ENCODE measurements at regions of chr1 and their contacts with region 1.

Region 1: GRCh38 chr1:23098463-23099170 is 70.0 kb downstream of the LUZP1 start:
- DNase-seq: peak; percentile 57
- H3K4me3 ChIP-seq: no peak overlapping the region
- H3K27ac ChIP-seq: no peak overlapping the region
- H3K4me1 ChIP-seq: no peaks in the 10 kb centered on the region
- H3K27me3 ChIP-seq: no peaks in the 10 kb centered on the region
- CTCF ChIP-seq: peak; percentile 73 to 96 (median 90)
- POLR2A ChIP-seq: no peak

Region 2: DNA sequence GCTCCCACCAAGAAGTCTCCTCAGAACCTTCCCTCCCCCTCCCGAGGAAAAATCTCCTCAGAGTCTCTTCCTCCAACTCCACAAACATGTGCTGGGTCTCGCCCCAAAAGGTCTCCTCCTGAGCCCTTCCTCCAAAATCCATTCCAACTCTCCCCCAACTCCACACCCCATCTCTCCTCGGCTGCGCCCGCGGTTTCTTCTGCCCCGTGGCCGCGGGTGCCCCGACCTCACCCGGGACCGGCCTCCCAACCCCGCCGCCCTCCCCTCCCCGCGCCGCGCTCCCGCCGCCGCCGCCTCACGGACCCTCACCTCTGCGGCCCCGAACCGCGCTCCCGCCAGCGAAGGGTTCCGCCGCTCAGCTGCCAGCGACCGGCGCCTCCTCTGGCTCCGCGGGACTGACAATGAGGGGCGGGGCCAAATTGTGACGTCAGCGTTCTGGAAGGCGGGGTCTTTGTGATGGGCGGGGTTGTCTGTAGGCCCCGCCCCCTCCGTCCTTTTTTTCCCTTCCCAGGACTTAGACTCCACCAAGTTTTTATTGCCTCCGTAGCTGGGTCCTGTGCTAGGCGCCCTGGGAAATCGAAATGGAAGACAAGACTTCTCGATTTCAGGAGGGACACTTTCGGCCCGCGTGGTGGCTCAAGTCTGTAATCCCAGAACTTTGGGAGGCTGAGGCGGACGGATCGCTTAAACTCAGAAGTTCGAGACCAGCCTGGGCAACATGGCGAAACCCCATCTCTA is 70.0 kb after region 1 on chr1 and contains the start of gene LUZP1:
- intact Hi-C with region 1: loop called (anchors 5 kb)
- DNase-seq: peak; percentile 90
- H3K4me3 ChIP-seq: peak within 1 kb of the TSS; percentile 75 to 93
- H3K27ac ChIP-seq: peak within 1 kb of the TSS; percentile 89 to 90
- H3K4me1 ChIP-seq: peaks cover 4% of the 10 kb centered on the region
- H3K27me3 ChIP-seq: no peaks in the 10 kb centered on the region
- CTCF ChIP-seq: peak in 2 of 4 experiments; percentile 6 to 7
- POLR2A ChIP-seq: peak; percentile 99
- total RNA-seq, gene LUZP1: 16.9 to 17.5 TPM

Region 3: DNA sequence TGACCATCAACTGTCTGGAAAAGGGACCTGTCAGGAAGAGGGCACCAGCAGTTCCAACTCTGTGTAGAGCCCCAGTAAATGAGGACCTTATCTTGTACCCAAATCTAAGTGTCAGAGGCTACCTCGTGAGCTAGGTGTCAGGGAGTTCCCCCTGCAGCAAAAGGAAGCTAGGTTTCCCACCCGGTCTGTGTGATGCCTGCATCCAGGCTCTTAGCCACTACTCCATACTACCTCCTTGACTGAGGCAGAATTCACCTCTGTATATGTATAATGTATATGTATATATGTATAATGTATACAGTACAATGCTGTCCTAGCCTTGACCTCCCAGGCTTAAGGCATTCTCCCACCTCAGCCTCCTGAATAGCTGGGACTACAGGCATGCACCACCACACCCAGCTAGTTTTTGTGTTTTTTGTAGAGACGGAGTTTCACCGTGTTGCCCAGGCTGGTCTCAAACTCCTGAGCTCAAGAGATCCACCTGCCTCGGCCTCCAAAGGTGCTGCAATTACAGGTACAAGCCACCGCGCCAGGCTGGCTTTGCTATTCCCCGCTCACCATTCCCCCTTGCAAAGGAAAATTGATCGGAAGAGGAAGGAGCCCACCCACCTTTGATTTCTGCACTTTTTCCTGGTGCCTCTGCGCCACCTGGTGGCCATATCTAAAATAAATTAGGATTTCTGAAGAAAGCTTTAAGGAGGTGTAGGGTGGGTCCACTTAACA is 85.8 kb after region 1 on chr1:
- intact Hi-C with region 1: loop called (anchors 2 kb)
- DNase-seq: peak; percentile 37
- H3K4me3 ChIP-seq: peak overlapping the region in 1 of 2 donors; percentile 19
- H3K27ac ChIP-seq: no peak overlapping the region
- H3K4me1 ChIP-seq: no peaks in the 10 kb centered on the region
- H3K27me3 ChIP-seq: no peaks in the 10 kb centered on the region
- CTCF ChIP-seq: peak; percentile 83 to 96 (median 90)
- POLR2A ChIP-seq: no peak

Region 4: GRCh38 chr1:23282957-23283356 is 184.3 kb after region 1 on chr1:
- intact Hi-C with region 1: loop called (anchors 10 kb)
- DNase-seq: no peak
- H3K4me3 ChIP-seq: no peak overlapping the region
- H3K27ac ChIP-seq: no peak overlapping the region
- H3K4me1 ChIP-seq: peaks cover 3% of the 10 kb centered on the region
- H3K27me3 ChIP-seq: no peaks in the 10 kb centered on the region
- CTCF ChIP-seq: no peak
- POLR2A ChIP-seq: no peak

Region 5: DNA sequence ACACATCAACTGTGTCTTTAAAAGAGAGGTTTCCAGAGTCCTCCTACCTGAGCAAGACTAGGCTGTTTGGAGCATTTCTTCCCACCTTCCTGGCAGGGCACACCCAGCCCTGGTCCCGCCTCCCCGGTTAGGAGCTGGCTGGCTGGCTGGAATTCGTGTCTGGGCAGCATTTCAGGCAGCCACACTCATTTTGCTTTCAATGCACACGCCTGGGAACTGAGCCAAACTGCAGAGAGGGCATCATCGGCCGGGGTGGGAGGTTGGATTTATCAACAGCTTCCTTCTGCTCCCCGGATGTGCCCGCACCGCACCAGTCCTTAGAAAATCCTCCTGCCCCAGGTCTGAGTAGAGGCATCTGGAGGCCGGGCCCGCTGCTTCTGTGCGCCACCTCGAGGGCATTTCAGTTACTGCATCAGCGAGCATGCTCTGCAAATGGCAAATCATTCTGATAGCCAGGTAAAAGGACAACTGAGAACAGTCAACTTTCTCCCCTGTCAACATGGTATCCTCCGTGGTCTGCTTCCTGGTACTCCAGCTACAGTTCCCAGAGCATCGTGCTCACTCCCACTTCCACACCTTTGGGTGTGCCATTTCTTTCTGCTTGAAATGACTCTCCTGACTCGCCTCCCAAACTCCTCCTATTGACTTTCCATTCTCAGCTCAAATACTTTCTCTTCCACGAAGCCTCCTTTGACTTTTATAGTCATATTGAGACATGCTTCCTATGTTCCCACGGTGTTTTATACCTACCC is 305.3 kb after region 1 on chr1:
- intact Hi-C with region 1: loop called (anchors 10 kb)
- DNase-seq: peak; percentile 95
- H3K4me3 ChIP-seq: no peak overlapping the region
- H3K27ac ChIP-seq: peak overlapping the region; percentile 43 to 63
- H3K4me1 ChIP-seq: peaks cover 28% of the 10 kb centered on the region
- H3K27me3 ChIP-seq: no peaks in the 10 kb centered on the region
- CTCF ChIP-seq: peak; percentile 74 to 98 (median 98)
- POLR2A ChIP-seq: no peak

Measured in prostate gland (tissue), 2 donors.